T-cell (primary cell): ENCODE measurements at regions of chr5 and their contacts with region 1.

Region 1: DNA sequence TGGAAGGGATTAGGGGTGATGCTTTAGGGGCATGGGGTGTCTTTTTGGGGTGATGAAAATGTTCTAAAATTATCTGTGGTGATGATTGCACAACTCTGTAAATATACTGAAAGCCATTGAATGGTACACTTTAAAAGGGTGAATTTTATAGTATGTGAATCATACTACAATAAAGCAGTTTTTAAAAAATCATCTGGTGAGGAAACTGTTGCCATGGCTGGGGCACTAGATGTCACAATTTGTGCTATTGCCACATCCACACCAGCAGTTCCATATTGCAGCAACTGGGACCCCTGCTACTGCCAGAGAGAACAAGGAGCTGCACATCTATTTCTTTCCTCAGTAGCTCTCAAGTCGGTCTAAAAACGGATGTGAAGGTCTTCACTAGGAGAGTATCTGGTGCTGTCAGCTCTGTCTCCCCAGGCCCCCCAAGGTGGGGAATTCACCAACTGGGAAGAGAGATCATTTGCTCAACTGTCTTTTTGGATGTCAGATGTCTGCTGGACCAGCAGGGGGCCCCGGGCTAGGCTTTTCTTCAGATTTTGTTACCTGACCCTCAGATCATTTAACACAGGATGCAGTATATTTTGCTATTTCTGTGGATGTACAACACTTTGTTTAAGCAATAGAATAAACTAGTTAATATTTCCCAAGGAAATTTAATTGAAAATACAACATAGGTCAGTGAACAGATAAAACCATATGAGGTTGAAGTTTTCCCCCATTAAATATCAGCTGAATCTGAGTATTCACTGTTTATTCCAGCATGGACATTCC is 13.2 kb downstream of the CMYA5 start:
- DNase-seq: peak in 28 of 35 experiments; percentile 10 to 55 (median 26)
- ATAC-seq: no peak
- H3K4me3 ChIP-seq: no peak overlapping the region
- H3K4me3 Mint-ChIP-seq: no peak overlapping the region
- H3K27ac ChIP-seq: no peak overlapping the region
- H3K27ac Mint-ChIP-seq: no peak overlapping the region
- H3K4me1 ChIP-seq: no peaks in the 10 kb centered on the region
- H3K4me1 Mint-ChIP-seq: peaks cover 0 to 4% (median 2%) of the 10 kb centered on the region in 3 donors
- H3K27me3 ChIP-seq: no peaks in the 10 kb centered on the region
- H3K27me3 Mint-ChIP-seq: no peaks in the 10 kb centered on the region

Region 2: GRCh38 chr5:80083101-80083890 is 380.5 kb after region 1 on chr5:
- CTCF ChIA-PET with region 1: interaction called, 3 to 11 read pairs
- POLR2A ChIA-PET with region 1: no interaction called
- DNase-seq: peak in 10 of 35 experiments; percentile 1 to 65 (median 13)
- ATAC-seq: peak; percentile 63 to 81 (median 79)
- H3K4me3 ChIP-seq: peak overlapping the region; percentile 25 to 44
- H3K4me3 Mint-ChIP-seq: peak overlapping the region; percentile 62 to 82 (median 64)
- H3K27ac ChIP-seq: peak overlapping the region; percentile 45
- H3K27ac Mint-ChIP-seq: peak overlapping the region; percentile 58 to 82
- H3K4me1 ChIP-seq: peaks cover 4 to 8% of the 10 kb centered on the region in 2 experiments
- H3K4me1 Mint-ChIP-seq: peaks cover 7 to 12% (median 10%) of the 10 kb centered on the region in 3 donors
- H3K27me3 ChIP-seq: no peaks in the 10 kb centered on the region
- H3K27me3 Mint-ChIP-seq: no peaks in the 10 kb centered on the region